Activated CD4-positive, alpha-beta T cell treated with anti-CD3 and anti-CD28 coated beads for 36 hours (primary cell): ENCODE measurements at regions of chr4 and their contacts with region 1.

Region 1: GRCh38 chr4:67714248-67714583 is 13.3 kb upstream of the UBA6 start:
- DNase-seq: peak; percentile 69
- ATAC-seq: peak; percentile 98
- H3K4me3 Mint-ChIP-seq: peak overlapping the region; percentile 27
- H3K27ac Mint-ChIP-seq: peak overlapping the region; percentile 72
- H3K4me1 Mint-ChIP-seq: peaks cover 30% of the 10 kb centered on the region
- H3K27me3 Mint-ChIP-seq: no peaks in the 10 kb centered on the region

Region 2: DNA sequence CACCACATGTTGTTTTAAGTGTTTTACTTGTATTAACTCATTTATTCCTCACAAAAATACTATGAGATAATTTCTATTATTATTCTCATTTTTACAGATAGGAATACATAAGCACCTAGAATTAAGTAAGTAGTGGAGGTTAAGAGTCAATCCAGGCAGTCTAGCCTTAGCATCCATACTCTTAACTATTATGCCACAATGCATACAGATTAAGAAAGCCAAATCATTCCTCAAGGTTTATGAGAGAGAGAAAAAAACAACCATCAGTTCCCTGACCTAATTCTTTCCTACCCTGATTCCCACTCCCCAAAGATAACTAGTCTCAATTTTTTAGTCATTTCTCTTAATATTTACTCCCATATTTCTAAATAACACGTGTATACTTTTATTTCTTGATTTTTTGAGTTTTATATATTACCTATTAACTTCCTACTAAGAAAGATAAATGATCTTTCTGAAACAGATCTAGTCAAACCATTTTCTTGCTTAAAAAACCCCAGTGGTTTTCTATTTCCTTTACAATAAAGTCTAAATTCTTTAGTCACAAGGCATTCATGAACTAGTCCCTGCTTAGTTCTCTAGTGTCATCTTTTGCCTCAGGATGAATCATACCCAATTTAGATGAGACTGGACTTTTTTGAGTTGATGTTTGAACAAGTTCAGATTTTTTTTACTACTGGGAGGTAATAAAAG is 29.2 kb before region 1 on chr4:
- CTCF ChIA-PET with region 1: no interaction called
- POLR2A ChIA-PET with region 1: no interaction called
- intact Hi-C with region 1: no loop called
- DNase-seq: no peak
- ATAC-seq: peak; percentile 88
- H3K4me3 Mint-ChIP-seq: no peak overlapping the region
- H3K27ac Mint-ChIP-seq: peak overlapping the region; percentile 9
- H3K4me1 Mint-ChIP-seq: peaks cover 22% of the 10 kb centered on the region
- H3K27me3 Mint-ChIP-seq: no peaks in the 10 kb centered on the region

Region 3: DNA sequence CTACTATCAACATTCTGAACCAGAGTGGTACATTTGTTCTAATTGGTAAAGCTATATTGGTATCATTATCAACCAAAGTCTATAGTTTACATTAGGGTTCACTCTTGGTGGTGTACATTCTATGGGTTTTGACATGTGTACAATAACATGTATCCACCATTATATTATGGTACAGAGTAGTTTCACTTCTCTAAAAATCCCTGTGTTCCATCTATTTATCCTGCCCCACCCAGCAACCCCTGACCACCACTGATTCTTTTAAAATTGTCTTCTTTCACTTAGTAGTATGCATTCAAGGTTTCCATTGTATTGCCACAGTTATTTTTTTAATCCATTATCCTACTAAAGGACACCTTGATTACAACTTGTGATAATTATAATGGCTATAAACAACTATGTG is 184.9 kb after region 1 on chr4:
- CTCF ChIA-PET with region 1: no interaction called
- POLR2A ChIA-PET with region 1: interaction called, 13 read pairs
- intact Hi-C with region 1: no loop called
- DNase-seq: no peak
- ATAC-seq: no peak
- H3K4me3 Mint-ChIP-seq: no peak overlapping the region
- H3K27ac Mint-ChIP-seq: no peak overlapping the region
- H3K4me1 Mint-ChIP-seq: no peaks in the 10 kb centered on the region
- H3K27me3 Mint-ChIP-seq: no peaks in the 10 kb centered on the region